Activated CD4-positive, alpha-beta T cell treated with anti-CD3 and anti-CD28 coated beads, Interleukin-2, amount 10 ng/mL, durations not matched to agents 7 days and 5 days (primary cell): ENCODE measurements at regions of chr15 and their contacts with region 1.

Region 1: GRCh38 chr15:88450109-88450798 is 16.9 kb downstream of the MRPL46 start:
- DNase-seq: peak; percentile 74
- H3K4me3 Mint-ChIP-seq: no peak overlapping the region
- H3K27ac Mint-ChIP-seq: no peak overlapping the region
- H3K4me1 Mint-ChIP-seq: peaks cover 4% of the 10 kb centered on the region
- H3K27me3 Mint-ChIP-seq: no peaks in the 10 kb centered on the region

Region 2: GRCh38 chr15:88438181-88438580 is 12.1 kb before region 1 on chr15:
- CTCF ChIA-PET with region 1: interaction called, 10 read pairs
- POLR2A ChIA-PET with region 1: no interaction called
- DNase-seq: no peak
- H3K4me3 Mint-ChIP-seq: no peak overlapping the region
- H3K27ac Mint-ChIP-seq: no peak overlapping the region
- H3K4me1 Mint-ChIP-seq: no peaks in the 10 kb centered on the region
- H3K27me3 Mint-ChIP-seq: peaks cover 9% of the 10 kb centered on the region

Region 3: GRCh38 chr15:88497109-88497765 is 47.0 kb after region 1 on chr15:
- CTCF ChIA-PET with region 1: no interaction called
- POLR2A ChIA-PET with region 1: no interaction called
- DNase-seq: no peak
- H3K4me3 Mint-ChIP-seq: no peak overlapping the region
- H3K27ac Mint-ChIP-seq: no peak overlapping the region
- H3K4me1 Mint-ChIP-seq: no peaks in the 10 kb centered on the region
- H3K27me3 Mint-ChIP-seq: no peaks in the 10 kb centered on the region